ENCODE measurements at regions of chr4 and their contacts with region 1.

Region 1: GRCh38 chr4:48133669-48134068 is 381 bp downstream of the TXK start:
- DNase-seq: no peak
- ATAC-seq: no peak
- H3K4me3 Mint-ChIP-seq: peak overlapping the region; percentile 90
- H3K27ac Mint-ChIP-seq: peak overlapping the region; percentile 99
- H3K4me1 Mint-ChIP-seq: peaks cover 80% of the 10 kb centered on the region
- H3K27me3 Mint-ChIP-seq: no peaks in the 10 kb centered on the region
- CTCF ChIP-seq: no peak

Region 2: GRCh38 chr4:48122756-48123155 is 10.9 kb before region 1 on chr4:
- CTCF ChIA-PET with region 1: interaction called, 185 read pairs
- POLR2A ChIA-PET with region 1: interaction called, 49 read pairs
- intact Hi-C with region 1: loop called (anchors 2 kb)
- DNase-seq: no peak
- ATAC-seq: no peak
- H3K4me3 Mint-ChIP-seq: no peak overlapping the region
- H3K27ac Mint-ChIP-seq: no peak overlapping the region
- H3K4me1 Mint-ChIP-seq: peaks cover 69% of the 10 kb centered on the region
- H3K27me3 Mint-ChIP-seq: no peaks in the 10 kb centered on the region
- CTCF ChIP-seq: no peak

Region 3: GRCh38 chr4:48237996-48238645 is 104.5 kb after region 1 on chr4:
- CTCF ChIA-PET with region 1: no interaction called
- POLR2A ChIA-PET with region 1: no interaction called
- intact Hi-C with region 1: no loop called
- DNase-seq: no peak
- ATAC-seq: no peak
- H3K4me3 Mint-ChIP-seq: no peak overlapping the region
- H3K27ac Mint-ChIP-seq: no peak overlapping the region
- H3K4me1 Mint-ChIP-seq: peaks cover 16% of the 10 kb centered on the region
- H3K27me3 Mint-ChIP-seq: peaks cover 1% of the 10 kb centered on the region
- CTCF ChIP-seq: no peak

Measured in activated CD8-positive, alpha-beta T cell treated with anti-CD3 and anti-CD28 coated beads for 36 hours (primary cell).